Activated CD4-positive, alpha-beta memory T cell treated with anti-CD3 and anti-CD28 coated beads for 36 hours (primary cell): ENCODE measurements at regions of chr17 and their contacts with region 1.

Region 1: GRCh38 chr17:30173649-30174048 is 57.0 kb downstream of the NSRP1 start:
- DNase-seq: peak; percentile 32
- H3K4me3 Mint-ChIP-seq: no peak overlapping the region
- H3K27ac Mint-ChIP-seq: no peak overlapping the region
- H3K4me1 Mint-ChIP-seq: peaks cover 19% of the 10 kb centered on the region
- H3K27me3 Mint-ChIP-seq: no peaks in the 10 kb centered on the region

Region 2: GRCh38 chr17:30124273-30124796 is 49.3 kb before region 1 on chr17:
- CTCF ChIA-PET with region 1: interaction called, 10 read pairs
- POLR2A ChIA-PET with region 1: no interaction called
- intact Hi-C with region 1: loop called (anchors 10 kb)
- DNase-seq: no peak
- H3K4me3 Mint-ChIP-seq: no peak overlapping the region
- H3K27ac Mint-ChIP-seq: no peak overlapping the region
- H3K4me1 Mint-ChIP-seq: peaks cover 34% of the 10 kb centered on the region
- H3K27me3 Mint-ChIP-seq: no peaks in the 10 kb centered on the region